WTC11 (cell line): ENCODE measurements at regions of chr14 and their contacts with region 1.

Region 1: GRCh38 chr14:69600304-69600891 is 11.0 kb upstream of the SUSD6 start:
- DNase-seq: no peak
- ATAC-seq: no peak
- H3K4me3 Mint-ChIP-seq: no peak overlapping the region
- H3K27ac Mint-ChIP-seq: peak overlapping the region; percentile 48; the same call in 1 of the 2 replicates
- H3K4me1 Mint-ChIP-seq: peaks cover 6% of the 10 kb centered on the region
- H3K27me3 Mint-ChIP-seq: no peaks in the 10 kb centered on the region
- CTCF ChIP-seq: no peak

Region 2: DNA sequence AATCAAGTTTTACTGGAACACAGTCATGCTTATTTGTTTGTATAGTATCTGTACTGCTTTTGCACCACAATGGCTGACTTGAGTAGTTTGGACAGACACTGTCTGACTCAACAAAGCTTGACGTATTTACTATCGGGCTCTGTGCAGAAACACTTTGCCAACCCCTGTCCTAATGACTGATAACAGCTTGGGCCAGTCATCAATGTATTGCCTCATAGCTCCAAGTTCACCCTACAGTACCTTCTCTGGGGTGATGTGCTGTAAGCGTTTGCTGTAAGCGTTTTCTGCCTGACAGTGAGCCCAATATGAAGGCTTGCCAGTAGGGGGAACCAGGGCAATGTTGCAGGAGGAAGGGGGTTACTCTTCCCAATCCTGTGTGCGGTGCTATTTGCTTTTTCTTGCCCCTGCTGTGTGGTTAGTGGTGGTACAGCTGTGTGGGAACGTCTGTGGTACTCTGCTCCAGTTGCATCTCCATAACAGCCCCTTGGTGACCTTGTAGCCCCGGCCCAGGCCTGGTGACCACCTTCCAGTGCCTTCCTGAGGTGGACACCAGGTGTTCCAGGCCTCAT is 20.3 kb before region 1 on chr14:
- CTCF ChIA-PET with region 1: interaction called, 11 read pairs
- POLR2A ChIA-PET with region 1: no interaction called
- DNase-seq: peak; percentile 73
- ATAC-seq: peak; percentile 98
- H3K4me3 Mint-ChIP-seq: no peak overlapping the region
- H3K27ac Mint-ChIP-seq: no peak overlapping the region
- H3K4me1 Mint-ChIP-seq: peaks cover 11% of the 10 kb centered on the region
- H3K27me3 Mint-ChIP-seq: peaks cover 15% of the 10 kb centered on the region
- CTCF ChIP-seq: peak; percentile 52; the same call in 1 of the 2 replicates